ENCODE measurements at regions of chr19 and their contacts with region 1.

Region 1: DNA sequence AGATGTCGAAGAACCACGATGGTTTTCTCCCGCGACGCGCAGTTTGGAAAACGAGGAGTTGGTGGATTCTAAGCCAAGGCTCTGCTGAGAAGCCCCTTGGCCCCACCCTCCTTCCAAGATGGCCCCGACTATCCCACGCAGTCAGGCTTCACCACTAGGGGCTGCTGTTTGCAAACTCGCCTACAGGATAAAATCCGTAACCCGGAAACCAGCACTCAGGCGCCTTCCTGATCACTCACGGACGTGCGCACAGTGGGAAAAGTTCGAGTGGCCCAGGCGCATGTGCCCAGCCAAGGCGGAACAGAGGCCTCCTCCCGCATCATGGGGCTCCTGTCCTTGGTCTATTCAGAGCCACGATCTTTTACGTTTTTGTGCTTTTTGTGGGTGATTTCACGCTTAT is 19.2 kb upstream of the UQCR11 start:
- DNase-seq: peak; percentile 70
- ATAC-seq: peak; percentile 80
- H3K4me3 ChIP-seq: no peak overlapping the region
- H3K4me3 Mint-ChIP-seq: no peak overlapping the region
- H3K27ac ChIP-seq: no peak overlapping the region
- H3K27ac Mint-ChIP-seq: peak overlapping the region; percentile 74
- H3K4me1 ChIP-seq: peaks cover 0 to 15% of the 10 kb centered on the region in 2 donors
- H3K4me1 Mint-ChIP-seq: peaks cover 9% of the 10 kb centered on the region
- H3K27me3 ChIP-seq: no peaks in the 10 kb centered on the region
- H3K27me3 Mint-ChIP-seq: no peaks in the 10 kb centered on the region
- CTCF ChIP-seq: peak; percentile 77

Region 2: DNA sequence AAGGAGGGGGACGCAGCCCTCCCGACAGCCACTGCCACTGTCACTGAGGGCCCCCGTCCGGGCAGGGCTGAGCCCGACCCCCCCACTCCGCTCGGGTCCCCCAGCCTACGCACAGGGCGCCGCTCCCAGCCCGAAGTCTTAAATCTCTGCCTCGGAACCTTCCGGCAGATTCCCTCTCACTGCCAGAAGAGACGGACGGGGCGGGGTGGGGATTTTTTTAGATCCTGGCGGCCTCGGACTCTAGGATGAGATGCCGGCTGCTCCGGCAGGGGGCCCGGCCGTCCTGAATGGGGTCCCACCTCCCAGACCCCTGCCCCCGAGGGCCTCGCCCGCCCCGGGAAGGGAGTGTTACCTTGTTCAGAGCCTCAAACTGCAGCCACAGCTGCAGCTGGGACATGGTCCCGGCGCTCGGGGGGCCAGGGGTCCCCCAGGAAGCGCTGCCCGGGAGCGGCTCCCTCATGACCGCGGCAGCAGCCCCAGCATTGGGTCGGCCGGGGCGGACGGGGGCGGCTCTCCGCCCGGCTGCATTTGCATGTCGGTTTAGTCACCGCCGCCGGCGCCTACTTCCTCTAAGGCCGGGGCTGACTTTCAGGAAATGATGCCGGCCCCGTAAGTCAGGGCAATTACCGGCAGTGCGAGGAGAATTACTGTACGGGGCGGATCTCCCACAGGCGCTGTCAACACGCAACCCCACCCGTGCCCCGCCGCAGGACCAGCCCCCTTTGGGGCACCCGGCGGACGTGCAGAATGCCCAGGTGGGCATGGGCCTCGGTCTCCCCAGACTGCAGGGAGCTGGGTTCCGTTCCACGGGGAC is 492.5 kb before region 1 on chr19:
- CTCF ChIA-PET with region 1: no interaction called
- POLR2A ChIA-PET with region 1: no interaction called
- intact Hi-C with region 1: no loop called
- DNase-seq: peak; percentile 91
- ATAC-seq: peak; percentile 73
- H3K4me3 ChIP-seq: peak overlapping the region; percentile 41 to 92 (median 78)
- H3K4me3 Mint-ChIP-seq: peak overlapping the region; percentile 90
- H3K27ac ChIP-seq: peak overlapping the region; percentile 78 to 89
- H3K27ac Mint-ChIP-seq: peak overlapping the region; percentile 93
- H3K4me1 ChIP-seq: peaks cover 42 to 58% of the 10 kb centered on the region in 2 donors
- H3K4me1 Mint-ChIP-seq: peaks cover 38% of the 10 kb centered on the region
- H3K27me3 ChIP-seq: no peaks in the 10 kb centered on the region
- H3K27me3 Mint-ChIP-seq: no peaks in the 10 kb centered on the region
- CTCF ChIP-seq: no peak

Region 3: DNA sequence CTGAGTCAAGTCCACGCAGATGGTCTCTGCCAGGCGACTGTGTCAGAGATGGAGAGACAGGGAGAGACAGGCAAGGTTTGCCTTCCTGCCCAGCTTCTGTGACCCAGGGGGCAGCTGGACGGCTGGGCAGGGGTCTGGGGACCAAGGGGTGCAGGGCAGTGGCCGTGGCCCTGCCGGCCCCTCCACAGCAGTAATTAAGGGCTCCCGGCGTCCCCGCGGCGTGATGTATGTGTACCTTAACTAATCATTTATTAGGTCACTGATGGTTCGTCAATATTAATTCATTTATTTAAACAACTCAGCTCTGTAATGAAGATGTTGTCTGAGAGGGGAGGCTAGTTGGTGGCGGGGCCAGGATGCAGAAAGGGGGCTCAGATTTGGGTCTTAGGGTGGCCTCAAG is 56.5 kb after region 1 on chr19:
- CTCF ChIA-PET with region 1: no interaction called
- POLR2A ChIA-PET with region 1: no interaction called
- intact Hi-C with region 1: no loop called
- DNase-seq: no peak
- ATAC-seq: no peak
- H3K4me3 ChIP-seq: no peak overlapping the region
- H3K4me3 Mint-ChIP-seq: no peak overlapping the region
- H3K27ac ChIP-seq: no peak overlapping the region
- H3K27ac Mint-ChIP-seq: no peak overlapping the region
- H3K4me1 ChIP-seq: peaks cover 0 to 1% of the 10 kb centered on the region in 2 donors
- H3K4me1 Mint-ChIP-seq: no peaks in the 10 kb centered on the region
- H3K27me3 ChIP-seq: peaks cover 0 to 54% (median 17%) of the 10 kb centered on the region in 4 experiments
- H3K27me3 Mint-ChIP-seq: peaks cover 41% of the 10 kb centered on the region
- CTCF ChIP-seq: no peak

Region 4: DNA sequence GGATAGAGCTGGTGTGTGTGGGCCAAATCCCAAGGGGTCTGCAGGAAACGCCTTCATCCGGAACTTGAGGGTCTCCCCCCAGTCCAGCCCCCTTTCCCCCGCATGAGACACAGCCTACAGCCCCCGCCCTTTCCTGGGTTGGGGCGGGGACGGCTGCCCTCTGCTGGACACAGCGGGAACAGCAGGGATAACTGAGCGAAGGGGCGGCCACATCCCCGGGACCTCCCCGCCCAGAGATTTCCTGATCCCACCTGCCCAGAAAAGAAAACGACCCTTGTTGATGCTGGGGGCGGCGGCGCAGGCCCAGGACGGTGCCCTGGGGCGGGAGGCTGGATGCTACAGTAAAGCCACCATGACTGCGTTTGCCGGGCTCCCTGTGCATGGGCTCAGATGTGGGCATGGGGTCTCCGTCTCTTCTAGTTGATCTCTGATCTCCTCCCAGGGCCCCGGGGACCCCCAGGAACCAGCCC is 143.0 kb after region 1 on chr19:
- CTCF ChIA-PET with region 1: interaction called, 4 read pairs
- POLR2A ChIA-PET with region 1: no interaction called
- intact Hi-C with region 1: loop called (anchors 2 kb)
- DNase-seq: peak; percentile 76
- ATAC-seq: peak; percentile 84
- H3K4me3 ChIP-seq: no peak overlapping the region
- H3K4me3 Mint-ChIP-seq: no peak overlapping the region
- H3K27ac ChIP-seq: no peak overlapping the region
- H3K27ac Mint-ChIP-seq: no peak overlapping the region
- H3K4me1 ChIP-seq: peaks cover 16 to 34% of the 10 kb centered on the region in 2 donors
- H3K4me1 Mint-ChIP-seq: peaks cover 4% of the 10 kb centered on the region
- H3K27me3 ChIP-seq: peaks cover 0 to 89% (median 69%) of the 10 kb centered on the region in 4 experiments
- H3K27me3 Mint-ChIP-seq: peaks cover 62% of the 10 kb centered on the region
- CTCF ChIP-seq: peak; percentile 93

Region 5: GRCh38 chr19:3094601-3095437 is 1470.4 kb after region 1 on chr19:
- CTCF ChIA-PET with region 1: no interaction called
- POLR2A ChIA-PET with region 1: no interaction called
- intact Hi-C with region 1: no loop called
- DNase-seq: peak; percentile 70
- ATAC-seq: peak; percentile 37
- H3K4me3 ChIP-seq: peak overlapping the region in 4 of 5 experiments; percentile 41 to 71 (median 58)
- H3K4me3 Mint-ChIP-seq: peak overlapping the region; percentile 84
- H3K27ac ChIP-seq: no peak overlapping the region
- H3K27ac Mint-ChIP-seq: peak overlapping the region; percentile 46
- H3K4me1 ChIP-seq: peaks cover 35 to 46% of the 10 kb centered on the region in 2 donors
- H3K4me1 Mint-ChIP-seq: peaks cover 28% of the 10 kb centered on the region
- H3K27me3 ChIP-seq: peaks cover 0 to 24% (median 10%) of the 10 kb centered on the region in 4 experiments
- H3K27me3 Mint-ChIP-seq: peaks cover 8% of the 10 kb centered on the region
- CTCF ChIP-seq: no peak